ENCODE measurements at regions of chr12 and their contacts with region 1.

Region 1: GRCh38 chr12:50637870-50638481 is 125.9 kb upstream of the ATF1 start:
- DNase-seq: peak; percentile 74
- H3K4me3 ChIP-seq: no peak overlapping the region
- H3K27ac ChIP-seq: no peak overlapping the region
- H3K4me1 ChIP-seq: peaks cover 12% of the 10 kb centered on the region
- H3K27me3 ChIP-seq: no peaks in the 10 kb centered on the region
- CTCF ChIP-seq: peak; percentile 24 to 43
- POLR2A ChIP-seq: no peak

Region 2: DNA sequence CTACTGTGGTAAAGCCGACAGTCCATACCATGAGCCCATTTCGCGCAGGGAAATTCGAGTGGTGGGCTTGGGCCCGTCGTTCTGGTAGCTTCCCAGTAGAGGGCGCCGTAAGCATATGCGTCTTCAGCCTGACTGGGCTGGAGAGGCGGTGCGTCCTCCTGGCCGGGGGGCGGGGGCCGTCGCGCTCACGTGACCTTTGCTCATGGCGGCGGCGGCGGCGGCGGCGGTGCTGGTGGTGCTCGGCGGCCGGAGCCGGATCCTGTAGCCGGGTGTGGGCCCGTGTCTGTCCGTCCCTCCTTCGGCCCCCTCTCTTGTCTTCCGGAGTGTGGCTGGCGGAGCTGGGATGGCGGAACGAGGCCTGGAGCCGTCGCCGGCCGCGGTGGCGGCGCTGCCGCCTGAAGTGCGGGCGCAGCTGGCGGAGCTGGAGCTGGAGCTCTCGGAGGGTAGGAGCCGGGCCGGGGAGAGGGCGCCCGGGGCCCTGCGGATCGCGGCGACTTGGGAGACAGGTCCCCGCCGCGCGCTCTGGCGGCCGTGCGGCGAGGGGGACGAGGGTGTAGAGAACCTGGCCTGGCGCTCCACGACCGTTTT is 133.1 kb before region 1 on chr12 and contains the start of gene DIP2B:
- CTCF ChIA-PET with region 1: interaction called, 261 read pairs
- POLR2A ChIA-PET with region 1: no interaction called
- dilution Hi-C with region 1: no loop called
- intact Hi-C with region 1: loop called (anchors 1 kb)
- DNase-seq: peak; percentile 90
- H3K4me3 ChIP-seq: peak within 1 kb of the TSS; percentile 84 to 97 (median 94)
- H3K27ac ChIP-seq: peak within 1 kb of the TSS; percentile 65
- H3K4me1 ChIP-seq: peaks cover 11% of the 10 kb centered on the region
- H3K27me3 ChIP-seq: no peaks in the 10 kb centered on the region
- CTCF ChIP-seq: peak; percentile 75 to 90
- POLR2A ChIP-seq: peak; percentile 59
- total RNA-seq, gene DIP2B: 27.7 and 28.0 TPM in 2 replicates

Region 3: DNA sequence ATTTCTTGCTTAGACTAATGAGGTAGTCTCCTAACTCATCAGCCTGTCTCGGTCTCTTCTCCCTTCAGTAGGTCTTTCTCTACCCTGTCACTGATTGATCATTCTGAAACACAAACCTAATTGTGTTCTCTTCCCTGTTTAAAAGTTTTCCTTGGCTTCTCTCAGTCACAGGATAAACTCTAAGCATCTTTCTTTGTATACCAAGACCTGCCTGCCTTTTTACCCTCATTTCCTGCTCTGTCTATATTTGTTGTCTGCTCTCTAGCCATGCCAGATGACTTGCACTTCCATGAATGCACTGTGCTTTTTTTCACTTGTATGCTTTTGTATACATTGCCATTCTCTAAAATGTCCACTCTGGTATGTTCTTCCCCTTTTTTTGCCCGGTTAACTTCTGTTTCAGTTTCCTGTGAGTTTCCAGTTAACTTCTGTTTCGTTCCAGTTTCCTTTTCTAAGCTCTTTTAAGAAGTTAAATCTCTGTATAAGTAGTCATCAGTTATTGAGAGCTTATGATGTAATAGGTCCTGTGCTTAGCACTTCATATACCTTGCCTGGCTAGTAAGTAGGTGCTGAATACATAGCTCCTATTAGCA is 120.4 kb before region 1 on chr12:
- CTCF ChIA-PET with region 1: interaction called, 13 read pairs
- POLR2A ChIA-PET with region 1: no interaction called
- dilution Hi-C with region 1: no loop called
- intact Hi-C with region 1: no loop called
- DNase-seq: peak; percentile 74
- H3K4me3 ChIP-seq: peak overlapping the region in 1 of 3 experiments; percentile 49
- H3K27ac ChIP-seq: peak overlapping the region; percentile 92
- H3K4me1 ChIP-seq: peaks cover 12% of the 10 kb centered on the region
- H3K27me3 ChIP-seq: no peaks in the 10 kb centered on the region
- CTCF ChIP-seq: no peak
- POLR2A ChIP-seq: no peak

Region 4: DNA sequence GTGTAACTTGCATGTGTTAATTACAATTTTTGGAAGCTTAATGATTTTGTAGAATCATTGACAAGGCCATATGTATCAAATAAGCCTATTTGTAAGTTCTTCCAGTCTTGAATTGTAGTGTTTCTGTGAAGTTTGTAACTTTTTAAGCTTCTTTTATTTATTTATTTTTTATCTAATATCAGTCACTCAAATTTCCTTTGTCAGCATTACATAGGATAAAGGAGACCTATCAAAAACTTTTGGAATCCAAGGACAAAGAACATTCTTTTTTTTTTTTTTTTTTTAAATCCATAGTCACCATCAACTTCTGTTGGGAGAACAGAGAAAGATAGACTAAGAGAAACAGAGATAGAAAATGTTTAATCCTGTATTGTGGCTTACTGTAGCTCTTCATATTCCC is 96.8 kb before region 1 on chr12:
- CTCF ChIA-PET with region 1: interaction called, 11 read pairs
- POLR2A ChIA-PET with region 1: no interaction called
- dilution Hi-C with region 1: no loop called
- intact Hi-C with region 1: no loop called
- DNase-seq: no peak
- H3K4me3 ChIP-seq: no peak overlapping the region
- H3K27ac ChIP-seq: no peak overlapping the region
- H3K4me1 ChIP-seq: peaks cover 5% of the 10 kb centered on the region
- H3K27me3 ChIP-seq: no peaks in the 10 kb centered on the region
- CTCF ChIP-seq: no peak
- POLR2A ChIP-seq: no peak

Region 5: GRCh38 chr12:50564237-50564947 is 73.6 kb before region 1 on chr12:
- CTCF ChIA-PET with region 1: interaction called, 11 read pairs
- POLR2A ChIA-PET with region 1: no interaction called
- dilution Hi-C with region 1: no loop called
- intact Hi-C with region 1: no loop called
- DNase-seq: peak; percentile 35
- H3K4me3 ChIP-seq: no peak overlapping the region
- H3K27ac ChIP-seq: peak overlapping the region; percentile 12
- H3K4me1 ChIP-seq: peaks cover 40% of the 10 kb centered on the region
- H3K27me3 ChIP-seq: no peaks in the 10 kb centered on the region
- CTCF ChIP-seq: no peak
- POLR2A ChIP-seq: no peak

Region 6: GRCh38 chr12:50597200-50598195 is 40.5 kb before region 1 on chr12:
- CTCF ChIA-PET with region 1: interaction called, 12 read pairs
- POLR2A ChIA-PET with region 1: no interaction called
- dilution Hi-C with region 1: no loop called
- intact Hi-C with region 1: loop called (anchors 5 kb)
- DNase-seq: peak; percentile 80
- H3K4me3 ChIP-seq: peak overlapping the region in 1 of 3 experiments; percentile 13
- H3K27ac ChIP-seq: peak overlapping the region; percentile 34
- H3K4me1 ChIP-seq: peaks cover 33% of the 10 kb centered on the region
- H3K27me3 ChIP-seq: no peaks in the 10 kb centered on the region
- CTCF ChIP-seq: no peak
- POLR2A ChIP-seq: no peak

Region 7: DNA sequence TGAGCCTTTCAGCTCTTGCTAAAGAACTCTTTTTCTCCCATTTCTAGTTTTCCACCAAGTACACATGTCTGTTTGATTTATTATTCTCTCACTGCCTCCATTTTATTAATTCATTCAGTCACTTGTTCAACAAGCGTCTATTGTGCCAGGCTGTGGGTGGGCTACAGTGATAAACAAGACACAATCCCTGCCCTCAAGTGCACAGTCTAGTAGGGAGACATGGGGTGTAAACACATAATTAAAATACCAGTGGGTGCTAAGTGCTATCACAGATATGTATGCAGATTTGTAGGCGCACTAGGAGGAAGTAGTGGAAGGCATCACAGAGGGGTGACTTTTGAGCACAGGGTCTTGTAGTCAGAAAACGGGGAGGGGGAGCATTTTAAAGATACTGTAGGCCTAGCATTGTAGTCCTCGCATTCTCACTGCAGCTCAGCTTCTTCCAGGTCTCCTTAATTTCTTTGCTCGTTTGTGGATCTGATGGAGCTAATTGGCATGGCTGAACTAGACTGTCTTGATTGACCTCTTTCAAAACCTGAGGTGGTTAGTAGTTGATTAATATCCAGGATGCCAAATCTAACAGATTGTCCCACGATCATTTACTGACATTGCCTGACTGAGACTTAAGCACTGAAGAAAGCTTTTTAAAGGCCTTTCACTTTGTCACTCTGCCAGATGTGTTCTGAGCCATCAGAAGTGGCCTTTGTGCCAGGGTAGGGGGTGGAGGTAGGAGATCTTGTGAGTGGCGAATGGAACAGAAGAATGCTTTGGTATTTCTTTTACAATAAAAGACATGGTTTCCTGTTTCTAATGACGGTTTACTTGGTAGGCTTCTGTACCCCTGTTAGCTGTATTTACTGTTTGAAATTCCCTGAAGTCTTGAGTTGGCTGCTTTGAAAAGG is 16.3 kb before region 1 on chr12:
- CTCF ChIA-PET with region 1: interaction called, 27 read pairs
- POLR2A ChIA-PET with region 1: no interaction called
- dilution Hi-C with region 1: no loop called
- intact Hi-C with region 1: no loop called
- DNase-seq: no peak
- H3K4me3 ChIP-seq: no peak overlapping the region
- H3K27ac ChIP-seq: no peak overlapping the region
- H3K4me1 ChIP-seq: peaks cover 28% of the 10 kb centered on the region
- H3K27me3 ChIP-seq: no peaks in the 10 kb centered on the region
- CTCF ChIP-seq: no peak
- POLR2A ChIP-seq: no peak